Endothelial cell of umbilical vein (primary cell): ENCODE measurements at regions of chr13 and their contacts with region 1.

Region 1: GRCh38 chr13:63435668-63436287 is 2020.1 kb upstream of the PCDH20 start:
- DNase-seq: peak; percentile 24
- H3K4me3 ChIP-seq: no peak overlapping the region
- H3K27ac ChIP-seq: no peak overlapping the region
- H3K4me1 ChIP-seq: peaks cover 10% of the 10 kb centered on the region
- H3K27me3 ChIP-seq: no peaks in the 10 kb centered on the region
- CTCF ChIP-seq: no peak
- POLR2A ChIP-seq: no peak

Region 2: DNA sequence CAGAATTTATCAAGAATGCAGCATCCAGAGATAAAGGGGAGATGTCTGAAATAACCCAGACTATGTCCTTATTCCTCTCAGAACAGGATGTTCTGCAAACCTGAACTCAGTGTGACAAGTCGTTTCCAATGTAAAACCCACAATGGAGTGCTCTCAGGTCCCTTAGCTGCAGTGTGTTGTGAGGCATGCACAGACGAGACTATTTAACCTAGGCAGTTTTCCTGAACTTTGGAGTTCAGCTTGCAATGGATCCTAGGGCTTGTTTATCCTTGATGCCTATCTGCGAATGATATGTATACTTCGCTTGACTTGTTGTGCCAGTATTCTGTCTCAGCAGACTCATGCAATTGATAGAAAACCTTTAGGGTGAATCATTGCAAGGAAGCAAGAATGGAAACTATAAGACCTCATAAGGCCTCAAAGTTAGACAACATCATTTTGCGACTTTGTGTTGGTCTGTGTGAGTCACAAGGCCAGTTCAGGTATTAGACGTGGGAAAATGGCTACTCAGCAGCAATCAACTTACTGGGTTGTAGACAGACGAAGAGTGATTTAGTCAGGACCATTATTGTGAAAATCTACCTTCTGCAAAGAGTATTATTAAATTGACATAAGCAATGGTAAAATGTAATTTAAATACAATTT is 419.8 kb after region 1 on chr13:
- CTCF ChIA-PET with region 1: no interaction called
- POLR2A ChIA-PET with region 1: no interaction called
- dilution Hi-C with region 1: no loop called
- intact Hi-C with region 1: loop called (anchors 5 kb)
- DNase-seq: no peak
- H3K4me3 ChIP-seq: no peak overlapping the region
- H3K27ac ChIP-seq: no peak overlapping the region
- H3K4me1 ChIP-seq: no peaks in the 10 kb centered on the region
- H3K27me3 ChIP-seq: no peaks in the 10 kb centered on the region
- CTCF ChIP-seq: no peak
- POLR2A ChIP-seq: no peak